ENCODE measurements at regions of chrX and their contacts with region 1.

Region 1: GRCh38 chrX:3651276-3651675 is 62.2 kb downstream of the PRKX start:
- DNase-seq: no peak
- H3K4me3 ChIP-seq: no peak overlapping the region
- H3K27ac ChIP-seq: no peak overlapping the region
- H3K4me1 ChIP-seq: no peaks in the 10 kb centered on the region
- H3K27me3 ChIP-seq: no peaks in the 10 kb centered on the region
- CTCF ChIP-seq: peak; percentile 10 to 52 (median 38)
- POLR2A ChIP-seq: no peak

Region 2: GRCh38 chrX:3811331-3812311 is 160.3 kb after region 1 on chrX:
- intact Hi-C with region 1: loop called (anchors 5 kb)
- DNase-seq: no peak
- H3K4me3 ChIP-seq: no peak overlapping the region
- H3K27ac ChIP-seq: no peak overlapping the region
- H3K4me1 ChIP-seq: no peaks in the 10 kb centered on the region
- H3K27me3 ChIP-seq: no peaks in the 10 kb centered on the region
- CTCF ChIP-seq: peak in 3 of 4 experiments; percentile 13 to 63 (median 21)
- POLR2A ChIP-seq: no peak